CD4-positive, alpha-beta memory T cell (primary cell): ENCODE measurements at regions of chr12 and their contacts with region 1.

Region 1: DNA sequence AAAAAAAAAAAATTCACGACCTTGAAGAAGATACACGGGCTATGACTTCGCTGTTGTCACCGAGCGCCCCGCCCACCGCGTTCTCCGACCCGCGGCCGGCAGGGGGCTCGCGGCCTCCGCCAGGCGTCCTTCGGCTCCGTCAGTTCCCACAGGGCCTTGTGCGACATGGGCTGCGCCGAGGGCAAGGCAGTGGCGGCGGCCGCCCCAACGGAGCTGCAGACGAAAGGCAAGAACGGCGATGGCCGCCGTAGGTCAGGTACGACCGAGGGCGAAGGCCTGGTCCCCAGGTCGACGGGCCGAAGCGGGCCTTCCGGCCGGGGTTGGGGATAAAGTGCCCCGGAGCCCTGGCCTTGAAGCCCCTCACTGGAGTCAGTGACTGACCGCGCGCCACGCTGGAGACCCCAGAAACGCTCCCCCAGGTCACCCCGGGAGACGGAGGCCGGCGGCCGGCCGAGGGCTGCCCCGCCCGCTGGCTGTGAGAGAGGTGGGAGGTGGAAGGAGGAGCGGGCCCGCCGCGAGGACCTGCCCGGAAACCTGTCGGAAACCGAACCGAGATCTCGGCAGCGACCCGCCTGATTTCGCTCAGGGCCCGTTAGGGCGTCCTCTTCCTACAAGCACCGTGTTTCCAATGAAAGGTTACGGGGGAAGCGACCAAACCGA is at the start of gene TXNRD1:
- DNase-seq: peak; percentile 78 to 84 (median 82)
- H3K4me3 ChIP-seq: peak within 1 kb of the TSS in 1 of 2 donors; percentile 62
- H3K4me3 Mint-ChIP-seq: peak within 1 kb of the TSS; percentile 73 to 92 (median 86)
- H3K27ac ChIP-seq: peak within 1 kb of the TSS; percentile 57
- H3K27ac Mint-ChIP-seq: peak within 1 kb of the TSS; percentile 2 to 93 (median 84)
- H3K4me1 ChIP-seq: peaks cover 29% of the 10 kb centered on the region
- H3K4me1 Mint-ChIP-seq: peaks cover 18 to 38% (median 27%) of the 10 kb centered on the region in 4 donors
- H3K27me3 ChIP-seq: no peaks in the 10 kb centered on the region
- H3K27me3 Mint-ChIP-seq: no peaks in the 10 kb centered on the region
- total RNA-seq, gene TXNRD1: 57.6 to 64.5 TPM

Region 2: GRCh38 chr12:103997286-103997900 is 218.4 kb before region 1 on chr12:
- CTCF ChIA-PET with region 1: no interaction called
- POLR2A ChIA-PET with region 1: no interaction called
- intact Hi-C with region 1: no loop called
- DNase-seq: no peak
- H3K4me3 ChIP-seq: no peak overlapping the region
- H3K4me3 Mint-ChIP-seq: no peak overlapping the region
- H3K27ac ChIP-seq: no peak overlapping the region
- H3K27ac Mint-ChIP-seq: no peak overlapping the region
- H3K4me1 ChIP-seq: no peaks in the 10 kb centered on the region
- H3K4me1 Mint-ChIP-seq: no peaks in the 10 kb centered on the region
- H3K27me3 ChIP-seq: no peaks in the 10 kb centered on the region
- H3K27me3 Mint-ChIP-seq: peaks cover 14 to 17% of the 10 kb centered on the region in 2 donors

Region 3: DNA sequence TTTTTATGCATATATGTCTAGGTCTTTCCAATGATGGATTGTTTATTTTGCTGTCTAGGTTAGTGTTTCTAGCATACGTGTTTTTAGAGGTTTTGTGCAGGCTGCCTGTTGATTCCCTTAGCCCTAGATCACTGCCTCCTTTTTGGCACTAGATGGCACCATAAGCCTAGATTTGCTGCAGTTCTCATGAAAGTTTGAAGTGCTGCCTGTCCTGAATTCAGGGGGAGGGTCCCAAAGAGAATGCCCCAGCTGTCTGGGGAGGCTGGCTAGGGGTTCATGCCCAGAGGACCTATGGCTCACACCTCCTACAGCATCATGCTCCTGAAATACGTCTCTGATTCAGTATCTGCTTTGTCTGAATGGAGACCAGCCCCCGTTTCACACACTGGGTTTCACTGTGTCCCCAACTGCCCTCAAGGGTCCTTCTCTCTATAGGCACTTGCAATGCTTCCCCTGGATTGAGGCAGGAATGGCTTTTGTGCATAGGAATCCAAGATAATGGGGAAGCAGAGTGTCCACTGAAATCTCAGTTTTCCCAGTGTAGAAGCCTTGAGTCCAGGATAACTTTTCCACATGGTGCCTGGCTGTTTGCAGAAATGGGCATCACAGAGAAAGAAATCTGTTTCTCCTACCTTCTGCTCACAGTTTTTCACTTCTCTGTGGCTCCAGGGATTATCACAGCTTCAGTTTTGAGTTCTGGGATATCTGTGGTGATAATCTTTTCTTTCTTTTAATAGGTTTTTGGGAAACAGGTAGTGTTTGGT is 14.3 kb before region 1 on chr12:
- CTCF ChIA-PET with region 1: interaction called, 13 read pairs
- POLR2A ChIA-PET with region 1: no interaction called
- intact Hi-C with region 1: loop called (anchors 1 kb)
- DNase-seq: peak; percentile 59 to 69 (median 65)
- H3K4me3 ChIP-seq: no peak overlapping the region
- H3K4me3 Mint-ChIP-seq: peak overlapping the region in 2 of 8 donors; percentile 3 to 22
- H3K27ac ChIP-seq: no peak overlapping the region
- H3K27ac Mint-ChIP-seq: no peak overlapping the region
- H3K4me1 ChIP-seq: no peaks in the 10 kb centered on the region
- H3K4me1 Mint-ChIP-seq: peaks cover 2 to 4% (median 3%) of the 10 kb centered on the region in 4 donors
- H3K27me3 ChIP-seq: no peaks in the 10 kb centered on the region
- H3K27me3 Mint-ChIP-seq: peaks cover 7 to 8% of the 10 kb centered on the region in 2 donors

Region 4: DNA sequence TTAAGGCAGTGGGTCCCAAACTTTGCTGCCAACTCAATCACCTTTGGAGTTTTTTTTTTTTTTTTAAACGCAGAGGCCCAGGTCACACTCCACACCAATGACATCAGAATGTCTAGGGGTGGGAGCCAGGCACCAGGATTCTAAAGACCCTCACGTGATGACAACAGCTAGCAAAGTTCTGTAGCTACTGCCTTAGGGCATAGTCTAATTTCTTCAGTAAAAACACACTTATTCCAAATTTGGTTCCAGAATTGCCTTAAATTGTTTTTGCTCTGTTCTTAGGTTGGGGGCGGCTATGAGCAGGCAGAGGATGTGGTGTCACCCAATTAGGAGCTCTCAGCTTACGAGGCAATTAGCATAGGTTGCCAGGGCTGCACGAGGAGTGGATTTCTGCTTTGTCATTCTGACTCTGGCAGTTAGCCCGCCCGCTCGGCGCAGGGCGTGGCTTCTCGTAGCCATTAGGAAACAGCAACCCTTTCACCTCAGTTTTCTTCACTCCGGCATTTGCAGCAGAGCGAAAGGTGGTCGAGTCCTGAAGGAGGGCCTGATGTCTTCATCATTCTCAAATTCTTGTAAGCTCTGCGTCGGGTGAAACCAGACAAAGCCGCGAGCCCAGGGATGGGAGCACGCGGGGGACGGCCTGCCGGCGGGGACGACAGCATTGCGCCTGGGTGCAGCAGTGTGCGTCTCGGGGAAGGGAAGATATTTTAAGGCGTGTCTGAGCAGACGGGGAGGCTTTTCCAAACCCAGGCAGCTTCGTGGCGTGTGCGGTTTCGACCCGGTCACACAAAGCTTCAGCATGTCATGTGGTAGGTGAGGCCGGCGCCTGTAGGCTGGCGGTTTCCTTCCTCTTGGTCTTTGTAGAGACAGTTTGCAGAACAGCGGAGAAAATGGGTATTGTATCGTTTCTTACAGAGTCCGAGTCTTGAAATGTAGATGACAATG is 71.0 kb after region 1 on chr12:
- CTCF ChIA-PET with region 1: interaction called, 26 read pairs
- POLR2A ChIA-PET with region 1: interaction called, 40 read pairs
- intact Hi-C with region 1: loop called (anchors 1 kb)
- DNase-seq: peak; percentile 87 to 94 (median 88)
- H3K4me3 ChIP-seq: peak overlapping the region; percentile 80 to 96
- H3K4me3 Mint-ChIP-seq: peak overlapping the region; percentile 94 to 100 (median 99)
- H3K27ac ChIP-seq: peak overlapping the region; percentile 82
- H3K27ac Mint-ChIP-seq: peak overlapping the region; percentile 94 to 99 (median 96)
- H3K4me1 ChIP-seq: peaks cover 35% of the 10 kb centered on the region
- H3K4me1 Mint-ChIP-seq: peaks cover 23 to 41% (median 30%) of the 10 kb centered on the region in 4 donors
- H3K27me3 ChIP-seq: no peaks in the 10 kb centered on the region
- H3K27me3 Mint-ChIP-seq: peaks cover 0 to 2% of the 10 kb centered on the region in 2 donors

Region 5: GRCh38 chr12:104411826-104412641 is 196.3 kb after region 1 on chr12:
- CTCF ChIA-PET with region 1: no interaction called
- POLR2A ChIA-PET with region 1: no interaction called
- intact Hi-C with region 1: no loop called
- DNase-seq: no peak
- H3K4me3 ChIP-seq: no peak overlapping the region
- H3K4me3 Mint-ChIP-seq: peak overlapping the region in 1 of 8 donors; percentile 68
- H3K27ac ChIP-seq: no peak overlapping the region
- H3K27ac Mint-ChIP-seq: peak overlapping the region in 1 of 7 donors; percentile 48
- H3K4me1 ChIP-seq: no peaks in the 10 kb centered on the region
- H3K4me1 Mint-ChIP-seq: no peaks in the 10 kb centered on the region
- H3K27me3 ChIP-seq: no peaks in the 10 kb centered on the region
- H3K27me3 Mint-ChIP-seq: peaks cover 2% of the 10 kb centered on the region in 2 donors

Region 6: DNA sequence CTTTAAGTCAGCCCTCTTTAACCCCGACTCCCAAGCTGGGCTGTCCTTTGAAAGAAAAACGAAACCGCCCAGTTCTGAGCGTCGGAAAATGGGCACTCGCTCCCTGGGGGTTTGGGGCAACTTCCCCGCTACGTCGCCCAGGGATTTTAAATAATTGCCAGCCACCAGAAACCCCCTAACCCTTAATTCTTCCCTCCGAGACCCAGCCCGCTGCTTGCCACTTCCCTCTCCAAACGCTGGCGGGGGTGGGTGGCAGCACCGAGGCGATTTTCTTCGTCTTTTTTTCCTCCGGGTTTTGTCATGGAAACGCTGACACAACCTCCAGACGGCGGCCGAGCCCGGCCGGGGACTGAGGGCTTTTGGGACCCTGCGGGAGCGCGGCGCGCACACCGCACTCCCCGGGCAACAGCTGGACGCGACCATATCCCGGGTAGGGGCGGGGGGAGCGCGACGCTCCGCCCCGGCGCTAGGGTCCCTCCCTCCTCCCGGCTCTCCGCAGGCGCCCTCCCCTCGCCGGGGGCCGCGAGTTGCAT is 240.7 kb after region 1 on chr12 and contains the start of gene CHST11:
- CTCF ChIA-PET with region 1: no interaction called
- POLR2A ChIA-PET with region 1: no interaction called
- intact Hi-C with region 1: no loop called
- DNase-seq: peak; percentile 66 to 85 (median 70)
- H3K4me3 ChIP-seq: peak within 1 kb of the TSS; percentile 72 to 99
- H3K4me3 Mint-ChIP-seq: peak within 1 kb of the TSS; percentile 98 to 100 (median 99)
- H3K27ac ChIP-seq: peak within 1 kb of the TSS; percentile 83
- H3K27ac Mint-ChIP-seq: peak within 1 kb of the TSS; percentile 85 to 98 (median 96)
- H3K4me1 ChIP-seq: peaks cover 34% of the 10 kb centered on the region
- H3K4me1 Mint-ChIP-seq: peaks cover 28 to 66% (median 39%) of the 10 kb centered on the region in 4 donors
- H3K27me3 ChIP-seq: no peaks in the 10 kb centered on the region
- H3K27me3 Mint-ChIP-seq: no peaks in the 10 kb centered on the region
- total RNA-seq, gene CHST11: 55.1 to 55.8 TPM

Region 7: GRCh38 chr12:104877123-104877705 is 661.4 kb after region 1 on chr12:
- CTCF ChIA-PET with region 1: no interaction called
- POLR2A ChIA-PET with region 1: no interaction called
- intact Hi-C with region 1: loop called (anchors 5 kb)
- DNase-seq: peak in 4 of 5 donors; percentile 27 to 31 (median 30)
- H3K4me3 ChIP-seq: no peak overlapping the region
- H3K4me3 Mint-ChIP-seq: no peak overlapping the region
- H3K27ac ChIP-seq: no peak overlapping the region
- H3K27ac Mint-ChIP-seq: no peak overlapping the region
- H3K4me1 ChIP-seq: no peaks in the 10 kb centered on the region
- H3K4me1 Mint-ChIP-seq: peaks cover 0 to 2% (median 0%) of the 10 kb centered on the region in 4 donors
- H3K27me3 ChIP-seq: no peaks in the 10 kb centered on the region
- H3K27me3 Mint-ChIP-seq: no peaks in the 10 kb centered on the region